BJ (cell line): ENCODE measurements at regions of chr7 and their contacts with region 1.

Region 1: GRCh38 chr7:40232242-40232893 is 97.6 kb downstream of the SUGCT start:
- DNase-seq: no peak
- H3K4me3 ChIP-seq: no peak overlapping the region
- H3K27me3 ChIP-seq: no peaks in the 10 kb centered on the region
- CTCF ChIP-seq: peak; percentile 60

Region 2: DNA sequence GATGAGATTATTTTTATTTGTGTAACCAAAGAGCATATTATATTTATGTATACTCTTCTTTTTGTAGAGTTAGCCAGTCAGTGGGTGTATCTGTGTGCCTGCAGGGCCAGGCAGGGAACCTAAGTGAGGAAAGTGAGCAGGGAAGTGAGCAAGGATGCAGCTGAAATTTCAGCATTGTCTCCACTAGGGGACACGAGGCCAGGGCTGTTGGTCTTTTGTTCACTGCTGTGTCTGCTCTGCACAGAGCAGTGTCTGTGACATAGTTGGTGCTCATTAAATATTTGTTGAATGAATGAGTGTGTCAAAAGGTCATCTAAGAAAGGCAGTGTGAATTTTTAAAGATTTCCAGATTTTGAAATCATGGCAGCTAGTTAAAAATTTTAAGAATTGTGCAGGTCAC is 45.8 kb before region 1 on chr7:
- CTCF ChIA-PET with region 1: no interaction called
- POLR2A ChIA-PET with region 1: no interaction called
- DNase-seq: no peak
- H3K4me3 ChIP-seq: no peak overlapping the region
- H3K27me3 ChIP-seq: no peaks in the 10 kb centered on the region
- CTCF ChIP-seq: no peak

Region 3: DNA sequence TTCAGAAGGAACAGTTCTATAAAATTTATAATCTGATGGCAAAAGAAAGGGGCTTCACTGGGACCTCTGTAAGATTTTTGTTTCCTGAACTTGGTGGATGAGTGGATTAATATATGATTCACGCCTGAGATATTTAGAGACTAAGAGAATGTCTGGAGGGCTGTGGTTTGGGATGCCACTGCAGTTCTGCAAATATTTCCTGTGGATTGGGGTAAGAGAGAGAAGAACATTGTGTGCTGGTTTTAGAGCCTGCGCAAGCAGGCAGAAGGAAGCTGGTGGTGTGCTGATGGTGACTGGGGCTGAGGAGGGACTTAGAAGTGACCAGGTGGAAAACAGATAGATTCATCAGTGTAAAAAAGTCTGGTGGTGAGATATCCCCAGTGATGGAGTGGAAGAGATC is 10.5 kb before region 1 on chr7:
- CTCF ChIA-PET with region 1: interaction called, 13 read pairs
- POLR2A ChIA-PET with region 1: no interaction called
- DNase-seq: peak; percentile 89
- H3K4me3 ChIP-seq: no peak overlapping the region
- H3K27me3 ChIP-seq: no peaks in the 10 kb centered on the region
- CTCF ChIP-seq: no peak

Region 4: GRCh38 chr7:40923626-40924025 is 691.3 kb after region 1 on chr7:
- CTCF ChIA-PET with region 1: no interaction called
- POLR2A ChIA-PET with region 1: interaction called, 10 read pairs
- DNase-seq: no peak
- H3K4me3 ChIP-seq: no peak overlapping the region
- H3K27me3 ChIP-seq: no peaks in the 10 kb centered on the region
- CTCF ChIP-seq: no peak